ENCODE measurements at regions of chr20 and their contacts with region 1.

Region 1: DNA sequence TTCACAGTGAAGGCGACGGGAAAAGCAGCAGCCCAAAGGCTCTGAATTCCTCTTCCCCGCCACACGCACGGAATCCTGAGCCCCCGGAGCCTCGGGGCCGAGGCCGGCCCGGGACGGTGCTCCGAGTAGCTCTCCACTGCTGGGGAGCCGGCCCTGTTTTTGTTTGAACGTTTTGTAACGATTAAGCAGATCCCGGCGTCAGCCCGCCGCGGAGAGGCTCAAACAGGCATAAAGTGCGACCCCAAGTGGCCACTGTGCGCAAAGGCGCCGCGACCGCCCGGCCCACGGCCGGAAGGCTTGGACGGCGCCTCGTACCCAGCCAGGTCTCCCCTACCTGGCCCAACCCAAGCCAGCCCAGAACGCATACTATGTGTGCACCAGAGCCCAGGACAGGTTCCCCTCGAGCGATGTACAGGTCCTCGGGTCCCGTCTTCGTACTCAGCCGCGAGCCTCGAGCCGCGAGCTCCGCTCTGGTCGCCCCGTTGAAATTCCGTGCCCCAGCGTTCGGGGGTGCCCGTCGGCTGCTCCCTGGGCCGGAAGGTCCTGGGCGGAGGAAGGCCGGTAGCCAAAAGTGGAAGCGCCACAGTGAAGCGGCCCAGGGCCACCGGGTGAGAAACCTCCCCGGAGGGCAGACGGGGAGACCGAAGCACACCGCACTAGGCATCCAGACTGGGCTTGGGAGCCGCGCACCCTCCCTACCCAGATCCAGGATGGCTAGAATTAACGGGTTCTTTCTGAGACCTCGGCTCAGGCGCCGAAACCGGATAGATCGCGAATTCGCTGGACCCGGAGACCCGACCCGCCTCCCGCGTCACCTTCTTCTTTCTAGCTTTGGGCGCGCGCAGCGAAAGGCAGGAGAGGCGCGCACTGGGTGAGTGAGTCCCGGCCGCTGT is 1.2 kb upstream of the MAFB start:
- DNase-seq: peak; percentile 91 to 98
- H3K4me3 ChIP-seq: peak overlapping the region; percentile 34
- CTCF ChIP-seq: peak in 1 of 3 donors; percentile 89
- POLR2A ChIP-seq: no peak

Region 2: DNA sequence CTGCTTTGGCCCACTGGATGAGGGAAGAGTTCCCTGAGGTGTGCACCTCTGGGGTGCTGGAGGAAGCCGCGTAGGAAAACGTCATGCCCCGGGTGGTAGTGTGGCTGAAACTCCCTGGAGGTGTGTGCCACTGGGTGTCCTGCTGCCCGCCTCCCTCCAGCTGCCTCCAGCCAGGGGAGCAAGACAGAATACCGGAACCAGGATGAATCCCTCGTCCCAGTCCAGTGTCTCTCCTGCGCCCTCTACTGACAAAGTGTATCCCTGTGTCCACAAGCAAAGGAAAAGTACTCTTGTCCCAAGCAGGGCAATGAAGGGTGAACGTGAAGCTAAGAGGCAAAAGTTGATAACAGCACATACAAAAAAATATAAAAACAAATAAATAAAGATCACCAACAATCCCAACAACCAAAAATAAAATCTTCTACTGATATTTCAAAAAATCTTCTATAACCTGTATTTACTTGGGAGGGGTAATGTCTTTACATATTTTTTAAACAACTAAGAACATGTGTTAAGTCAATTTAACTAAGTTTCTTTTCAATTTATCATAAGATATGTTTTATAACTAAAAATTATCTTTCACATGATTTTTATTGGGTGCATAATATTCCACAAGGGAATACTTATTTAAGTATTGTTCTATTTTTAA is 438.8 kb before region 1 on chr20:
- intact Hi-C with region 1: loop called (anchors 10 kb)
- DNase-seq: no peak
- H3K4me3 ChIP-seq: no peak overlapping the region
- CTCF ChIP-seq: no peak
- POLR2A ChIP-seq: no peak

Measured in lower leg skin (tissue), 4 donors.